ENCODE measurements at regions of chr5 and their contacts with region 1.

Region 1: GRCh38 chr5:126600631-126601511 is at the start of gene PHAX:
- DNase-seq: peak; percentile 74 to 87 (median 79)
- H3K4me3 ChIP-seq: peak within 1 kb of the TSS; percentile 91
- H3K27ac ChIP-seq: peak within 1 kb of the TSS; percentile 54 to 67
- H3K4me1 ChIP-seq: peaks cover 13% of the 10 kb centered on the region
- H3K27me3 ChIP-seq: no peaks in the 10 kb centered on the region
- CTCF ChIP-seq: peak; percentile 61 to 85 (median 72)
- EP300 ChIP-seq: no peak
- POLR2A ChIP-seq: peak; percentile 15
- total RNA-seq, gene PHAX: 25.8 to 37.1 (median 33.5) TPM

Region 2: GRCh38 chr5:126339215-126339805 is 261.6 kb before region 1 on chr5:
- intact Hi-C with region 1: loop called in 2 of 4 experiments (anchors 5 to 10 kb)
- DNase-seq: peak in 4 of 5 donors; percentile 20 to 65 (median 32)
- H3K4me3 ChIP-seq: no peak overlapping the region
- H3K27ac ChIP-seq: no peak overlapping the region
- H3K4me1 ChIP-seq: no peaks in the 10 kb centered on the region
- H3K27me3 ChIP-seq: no peaks in the 10 kb centered on the region
- CTCF ChIP-seq: peak; percentile 59 to 89 (median 78)
- EP300 ChIP-seq: no peak
- POLR2A ChIP-seq: no peak

Region 3: DNA sequence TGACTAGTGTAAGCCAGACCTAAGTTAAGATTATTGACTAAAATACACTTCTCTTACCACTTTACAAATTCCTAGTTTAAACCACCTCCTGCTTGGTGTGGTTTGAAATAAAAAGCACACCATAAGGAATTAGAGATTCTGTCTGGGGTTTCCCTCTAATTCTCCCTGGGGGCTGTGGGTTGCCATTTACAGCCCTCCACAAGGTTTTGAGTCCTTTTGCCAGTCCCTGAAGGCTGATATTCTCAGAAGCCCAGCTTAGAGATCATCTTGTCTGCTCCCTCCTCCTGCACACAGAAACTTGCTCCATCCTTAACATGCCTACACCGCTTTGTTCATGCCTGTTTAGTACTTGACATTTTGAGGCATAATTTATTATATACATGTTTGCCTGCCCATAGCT is 168.8 kb after region 1 on chr5:
- intact Hi-C with region 1: no loop called
- DNase-seq: no peak
- H3K4me3 ChIP-seq: no peak overlapping the region
- H3K27ac ChIP-seq: no peak overlapping the region
- H3K4me1 ChIP-seq: no peaks in the 10 kb centered on the region
- H3K27me3 ChIP-seq: no peaks in the 10 kb centered on the region
- CTCF ChIP-seq: no peak
- EP300 ChIP-seq: no peak
- POLR2A ChIP-seq: no peak

Region 4: DNA sequence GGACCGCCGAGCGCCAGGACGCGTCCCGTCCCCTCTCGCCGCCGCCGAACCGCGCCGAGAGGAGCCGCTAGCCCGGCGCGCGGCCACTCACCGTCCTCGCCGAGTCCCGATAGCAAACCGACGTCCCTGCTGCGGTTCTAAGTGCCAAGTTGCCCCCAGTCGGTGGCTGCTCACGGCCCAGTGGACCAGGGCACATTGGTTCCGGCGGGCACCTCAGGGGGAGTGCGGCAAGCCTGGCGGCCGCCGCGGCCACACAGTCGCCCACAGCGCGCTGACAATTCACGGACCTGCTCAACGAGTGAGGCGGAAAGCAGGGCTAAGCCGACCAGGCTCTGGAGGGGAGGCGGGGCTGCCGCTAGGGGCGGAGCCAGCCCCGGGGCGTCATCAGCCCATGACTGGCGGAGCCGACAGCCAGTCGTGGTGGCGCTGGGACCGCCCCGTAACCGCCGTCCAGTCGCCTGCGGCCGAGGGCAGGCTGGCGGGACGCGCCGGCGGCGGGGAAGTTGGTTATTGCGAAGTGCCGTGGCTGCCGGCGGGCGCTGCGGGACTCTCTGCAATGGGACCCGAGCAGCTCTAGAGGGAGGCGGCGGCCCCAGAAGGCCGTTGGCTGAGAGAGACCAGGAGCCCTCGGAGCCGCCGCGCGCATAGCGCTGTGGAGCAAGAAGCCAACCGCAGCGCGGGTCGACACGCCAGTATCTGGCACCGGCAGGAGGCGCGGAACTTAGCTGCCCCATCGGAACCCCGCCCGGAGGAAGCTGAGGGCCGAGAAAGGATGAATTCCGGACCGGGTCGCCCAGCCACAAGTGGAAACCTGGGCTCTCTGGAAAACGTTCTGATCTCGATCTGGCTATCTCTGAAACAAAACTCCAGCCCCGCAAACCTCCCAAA is 429.6 kb after region 1 on chr5 and contains the start of gene MARCHF3:
- intact Hi-C with region 1: no loop called
- DNase-seq: peak; percentile 92 to 96 (median 95)
- H3K4me3 ChIP-seq: peak within 1 kb of the TSS; percentile 90
- H3K27ac ChIP-seq: peak within 1 kb of the TSS; percentile 25 to 84
- H3K4me1 ChIP-seq: peaks cover 6% of the 10 kb centered on the region
- H3K27me3 ChIP-seq: no peaks in the 10 kb centered on the region
- CTCF ChIP-seq: peak in 2 of 3 donors; percentile 15 to 36
- EP300 ChIP-seq: no peak
- POLR2A ChIP-seq: peak; percentile 81
- total RNA-seq, gene MARCHF3: 2.1 to 13.8 (median 4.5) TPM